Activated CD4-positive, alpha-beta T cell treated with anti-CD3 and anti-CD28 coated beads for 36 hours (primary cell): ENCODE measurements at regions of chr15 and their contacts with region 1.

Region 1: DNA sequence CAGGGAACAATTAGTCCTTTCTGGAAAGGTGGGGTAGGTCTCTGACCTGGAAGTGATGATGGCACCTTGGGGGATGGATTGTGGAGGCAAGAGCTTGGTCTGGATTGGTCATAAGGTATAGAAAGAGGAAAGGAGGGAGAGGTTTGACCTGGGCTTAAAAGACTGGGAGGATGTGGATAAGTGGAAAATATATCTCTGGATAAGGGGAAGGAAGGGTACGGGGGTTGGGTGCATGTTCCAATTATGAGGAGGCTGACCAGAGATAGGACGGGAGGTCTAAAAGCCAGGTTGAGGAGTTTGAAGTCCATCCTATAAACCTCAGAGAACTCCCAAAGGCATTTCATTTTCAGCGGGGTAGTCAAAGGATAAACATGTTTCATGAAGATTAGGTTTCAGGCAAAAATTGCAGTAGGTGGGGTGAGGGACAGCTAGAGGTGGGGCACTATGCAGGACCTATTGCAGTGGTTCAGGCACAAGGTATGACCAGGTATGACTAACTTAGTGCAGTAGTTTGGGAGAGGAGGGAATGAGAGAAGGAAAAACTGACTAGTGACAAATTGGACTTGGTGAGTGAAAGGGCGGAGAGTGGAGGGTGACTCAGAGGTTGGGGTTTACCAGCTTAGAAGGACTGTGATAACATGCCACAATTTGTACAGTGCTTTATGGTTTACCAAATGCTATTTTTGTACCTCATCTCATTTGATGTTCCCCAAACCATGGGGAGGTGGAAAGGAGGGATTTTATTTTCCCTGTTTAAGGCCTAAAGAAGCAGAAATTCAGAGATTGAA is 10.7 kb downstream of the PDE8A start:
- DNase-seq: peak; percentile 72
- ATAC-seq: peak; percentile 89
- H3K4me3 Mint-ChIP-seq: no peak overlapping the region
- H3K27ac Mint-ChIP-seq: peak overlapping the region; percentile 45
- H3K4me1 Mint-ChIP-seq: peaks cover 52% of the 10 kb centered on the region
- H3K27me3 Mint-ChIP-seq: no peaks in the 10 kb centered on the region

Region 2: GRCh38 chr15:84734794-84735479 is 257.4 kb before region 1 on chr15:
- CTCF ChIA-PET with region 1: no interaction called
- POLR2A ChIA-PET with region 1: no interaction called
- intact Hi-C with region 1: loop called in 1 of 2 experiments (anchors 10 kb)
- DNase-seq: peak; percentile 87
- ATAC-seq: peak; percentile 72
- H3K4me3 Mint-ChIP-seq: peak overlapping the region; percentile 59
- H3K27ac Mint-ChIP-seq: peak overlapping the region; percentile 97
- H3K4me1 Mint-ChIP-seq: peaks cover 63% of the 10 kb centered on the region
- H3K27me3 Mint-ChIP-seq: no peaks in the 10 kb centered on the region

Region 3: GRCh38 chr15:84855136-84855535 is 137.2 kb before region 1 on chr15:
- CTCF ChIA-PET with region 1: no interaction called
- POLR2A ChIA-PET with region 1: no interaction called
- intact Hi-C with region 1: no loop called
- DNase-seq: no peak
- ATAC-seq: no peak
- H3K4me3 Mint-ChIP-seq: no peak overlapping the region
- H3K27ac Mint-ChIP-seq: no peak overlapping the region
- H3K4me1 Mint-ChIP-seq: no peaks in the 10 kb centered on the region
- H3K27me3 Mint-ChIP-seq: no peaks in the 10 kb centered on the region

Region 4: GRCh38 chr15:85030301-85031049 is 38.1 kb after region 1 on chr15:
- CTCF ChIA-PET with region 1: interaction called, 3 read pairs
- POLR2A ChIA-PET with region 1: no interaction called
- intact Hi-C with region 1: loop called in 1 of 2 experiments (anchors 5 kb)
- DNase-seq: peak; percentile 14
- ATAC-seq: peak; percentile 82
- H3K4me3 Mint-ChIP-seq: no peak overlapping the region
- H3K27ac Mint-ChIP-seq: peak overlapping the region; percentile 8
- H3K4me1 Mint-ChIP-seq: peaks cover 52% of the 10 kb centered on the region
- H3K27me3 Mint-ChIP-seq: no peaks in the 10 kb centered on the region

Region 5: GRCh38 chr15:85073556-85074194 is 81.3 kb after region 1 on chr15:
- CTCF ChIA-PET with region 1: interaction called, 4 read pairs
- POLR2A ChIA-PET with region 1: no interaction called
- intact Hi-C with region 1: loop called in 1 of 2 experiments (anchors 5 kb)
- DNase-seq: peak; percentile 58
- ATAC-seq: peak; percentile 100
- H3K4me3 Mint-ChIP-seq: peak overlapping the region; percentile 26
- H3K27ac Mint-ChIP-seq: peak overlapping the region; percentile 89
- H3K4me1 Mint-ChIP-seq: peaks cover 18% of the 10 kb centered on the region
- H3K27me3 Mint-ChIP-seq: no peaks in the 10 kb centered on the region

Region 6: GRCh38 chr15:85178308-85178707 is 186.0 kb after region 1 on chr15:
- CTCF ChIA-PET with region 1: no interaction called
- POLR2A ChIA-PET with region 1: no interaction called
- intact Hi-C with region 1: no loop called
- DNase-seq: no peak
- ATAC-seq: no peak
- H3K4me3 Mint-ChIP-seq: no peak overlapping the region
- H3K27ac Mint-ChIP-seq: no peak overlapping the region
- H3K4me1 Mint-ChIP-seq: no peaks in the 10 kb centered on the region
- H3K27me3 Mint-ChIP-seq: peaks cover 6% of the 10 kb centered on the region